GM10248 (cell line): ENCODE measurements at regions of chr17 and their contacts with region 1.

Region 1: GRCh38 chr17:29389982-29390850 is at the start of gene TAOK1:
- DNase-seq: peak; percentile 97
- CTCF ChIP-seq: no peak

Region 2: DNA sequence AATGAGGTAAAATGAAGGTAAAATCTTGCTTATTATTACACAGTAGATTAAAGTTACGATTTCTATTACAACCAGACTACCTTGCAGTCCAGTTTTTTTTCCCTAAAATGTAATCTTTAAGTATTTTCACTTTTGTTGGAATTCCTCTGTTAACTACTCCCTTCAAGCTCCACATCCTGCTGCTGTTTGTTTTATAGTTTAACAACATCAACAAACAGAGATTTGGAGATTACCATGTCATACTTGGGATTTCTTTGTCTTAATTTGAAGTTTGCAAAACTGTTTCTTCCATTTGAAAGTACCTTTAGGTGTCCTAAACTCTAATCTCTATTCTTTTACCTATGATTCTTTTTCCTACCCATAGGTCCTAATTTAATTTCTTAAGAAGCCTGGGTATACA is 93.3 kb after region 1 on chr17:
- CTCF ChIA-PET with region 1: no interaction called
- POLR2A ChIA-PET with region 1: interaction called, 11 read pairs
- DNase-seq: no peak
- CTCF ChIP-seq: no peak